PC-3 (cell line): ENCODE measurements at regions of chr2 and their contacts with region 1.

Region 1: DNA sequence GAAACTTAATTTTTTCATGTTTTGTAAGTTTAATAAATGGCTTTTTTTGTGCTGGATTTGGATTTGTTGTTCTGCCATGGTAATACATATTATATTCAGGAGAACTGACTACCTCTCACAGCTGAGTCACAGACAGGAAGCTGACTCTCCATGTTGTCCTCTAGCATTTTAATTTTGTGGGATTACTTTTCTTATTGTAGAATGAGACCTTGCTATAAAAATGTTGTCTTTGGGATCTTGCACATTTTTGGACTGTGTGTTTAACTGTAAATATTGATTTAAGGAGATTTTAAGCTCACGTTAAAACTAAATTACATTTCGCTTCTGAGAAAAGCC is 48.8 kb downstream of the MAP4K4 start:
- DNase-seq: peak; percentile 88
- ATAC-seq: peak; percentile 92
- H3K4me3 ChIP-seq: peak overlapping the region; percentile 49
- H3K27ac ChIP-seq: peak overlapping the region; percentile 98
- H3K4me1 ChIP-seq: peaks cover 57% of the 10 kb centered on the region
- H3K27me3 ChIP-seq: no peaks in the 10 kb centered on the region
- CTCF ChIP-seq: no peak

Region 2: GRCh38 chr2:101361121-101361870 is 385.1 kb before region 1 on chr2:
- CTCF ChIA-PET with region 1: no interaction called
- POLR2A ChIA-PET with region 1: interaction called, 14 read pairs
- intact Hi-C with region 1: no loop called
- DNase-seq: peak; percentile 40
- ATAC-seq: no peak; the same call in 1 of the 2 replicates
- H3K4me3 ChIP-seq: no peak overlapping the region
- H3K27ac ChIP-seq: peak overlapping the region; percentile 88
- H3K4me1 ChIP-seq: peaks cover 44% of the 10 kb centered on the region
- H3K27me3 ChIP-seq: no peaks in the 10 kb centered on the region
- CTCF ChIP-seq: no peak

Region 3: GRCh38 chr2:101759162-101759561 is 12.8 kb after region 1 on chr2:
- CTCF ChIA-PET with region 1: no interaction called
- POLR2A ChIA-PET with region 1: interaction called, 16 read pairs
- intact Hi-C with region 1: no loop called
- DNase-seq: peak; percentile 92
- ATAC-seq: peak; percentile 65
- H3K4me3 ChIP-seq: 0 out of 2 replicates have a peak overlapping the region, but pooled peaks have one; percentile 5
- H3K27ac ChIP-seq: peak overlapping the region; percentile 66
- H3K4me1 ChIP-seq: peaks cover 57% of the 10 kb centered on the region
- H3K27me3 ChIP-seq: no peaks in the 10 kb centered on the region
- CTCF ChIP-seq: no peak

Region 4: GRCh38 chr2:101823347-101823791 is 77.0 kb after region 1 on chr2:
- CTCF ChIA-PET with region 1: no interaction called
- POLR2A ChIA-PET with region 1: no interaction called
- intact Hi-C with region 1: loop called (anchors 1 kb)
- DNase-seq: peak; percentile 67
- ATAC-seq: no peak
- H3K4me3 ChIP-seq: no peak overlapping the region
- H3K27ac ChIP-seq: peak overlapping the region; percentile 78
- H3K4me1 ChIP-seq: peaks cover 71% of the 10 kb centered on the region
- H3K27me3 ChIP-seq: no peaks in the 10 kb centered on the region
- CTCF ChIP-seq: peak; percentile 69